ENCODE measurements at regions of chr4 and their contacts with region 1.

Region 1: DNA sequence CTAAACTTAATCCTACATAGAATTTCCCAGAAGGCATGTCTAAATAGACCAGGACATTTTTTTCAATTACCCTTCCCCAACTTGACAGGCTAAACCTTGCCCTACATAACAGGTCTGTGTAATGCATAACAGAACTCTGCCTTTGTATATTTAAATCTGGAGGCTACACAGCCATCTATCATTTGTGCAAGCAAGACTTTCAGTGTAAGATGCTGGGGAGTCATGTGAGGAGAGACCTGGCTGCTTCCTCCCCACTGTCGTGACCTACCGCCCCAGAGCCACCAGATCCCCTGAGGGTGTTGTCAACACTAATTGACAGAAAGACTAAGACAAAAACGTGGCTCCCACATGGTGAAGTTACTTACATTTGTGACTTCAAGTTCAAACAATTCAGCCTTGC is 342.2 kb downstream of the PPARGC1A start:
- DNase-seq: no peak
- H3K4me3 ChIP-seq: no peak overlapping the region
- H3K27ac ChIP-seq: no peak overlapping the region
- H3K4me1 ChIP-seq: no peaks in the 10 kb centered on the region
- H3K27me3 ChIP-seq: no peaks in the 10 kb centered on the region
- CTCF ChIP-seq: no peak
- POLR2A ChIP-seq: no peak

Region 2: DNA sequence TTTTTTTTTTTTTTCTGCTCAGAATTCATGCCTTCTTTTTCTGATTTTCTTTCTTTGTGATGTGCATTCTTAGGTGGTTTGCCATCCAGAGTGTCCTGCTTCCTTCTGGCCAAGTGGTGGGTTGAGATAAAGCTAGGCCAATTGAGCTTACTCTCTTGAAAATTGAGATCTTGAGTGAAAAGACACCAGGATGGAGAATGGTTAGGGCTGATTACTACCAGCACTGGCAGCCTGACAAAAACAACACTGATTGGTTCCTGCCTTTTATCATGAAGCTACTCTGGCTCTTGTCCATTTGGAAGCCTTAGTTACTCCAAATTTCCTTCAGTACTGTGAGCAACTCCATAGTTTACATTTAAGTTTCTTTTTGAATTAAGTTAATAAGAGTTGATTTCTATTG is 61.8 kb before region 1 on chr4:
- intact Hi-C with region 1: loop called (anchors 2 kb)
- DNase-seq: no peak
- H3K4me3 ChIP-seq: no peak overlapping the region
- H3K27ac ChIP-seq: no peak overlapping the region
- H3K4me1 ChIP-seq: no peaks in the 10 kb centered on the region
- H3K27me3 ChIP-seq: no peaks in the 10 kb centered on the region
- CTCF ChIP-seq: no peak
- POLR2A ChIP-seq: no peak

Measured in breast epithelium (tissue), 4 donors.